ENCODE measurements at regions of chr9 and their contacts with region 1.

Region 1: DNA sequence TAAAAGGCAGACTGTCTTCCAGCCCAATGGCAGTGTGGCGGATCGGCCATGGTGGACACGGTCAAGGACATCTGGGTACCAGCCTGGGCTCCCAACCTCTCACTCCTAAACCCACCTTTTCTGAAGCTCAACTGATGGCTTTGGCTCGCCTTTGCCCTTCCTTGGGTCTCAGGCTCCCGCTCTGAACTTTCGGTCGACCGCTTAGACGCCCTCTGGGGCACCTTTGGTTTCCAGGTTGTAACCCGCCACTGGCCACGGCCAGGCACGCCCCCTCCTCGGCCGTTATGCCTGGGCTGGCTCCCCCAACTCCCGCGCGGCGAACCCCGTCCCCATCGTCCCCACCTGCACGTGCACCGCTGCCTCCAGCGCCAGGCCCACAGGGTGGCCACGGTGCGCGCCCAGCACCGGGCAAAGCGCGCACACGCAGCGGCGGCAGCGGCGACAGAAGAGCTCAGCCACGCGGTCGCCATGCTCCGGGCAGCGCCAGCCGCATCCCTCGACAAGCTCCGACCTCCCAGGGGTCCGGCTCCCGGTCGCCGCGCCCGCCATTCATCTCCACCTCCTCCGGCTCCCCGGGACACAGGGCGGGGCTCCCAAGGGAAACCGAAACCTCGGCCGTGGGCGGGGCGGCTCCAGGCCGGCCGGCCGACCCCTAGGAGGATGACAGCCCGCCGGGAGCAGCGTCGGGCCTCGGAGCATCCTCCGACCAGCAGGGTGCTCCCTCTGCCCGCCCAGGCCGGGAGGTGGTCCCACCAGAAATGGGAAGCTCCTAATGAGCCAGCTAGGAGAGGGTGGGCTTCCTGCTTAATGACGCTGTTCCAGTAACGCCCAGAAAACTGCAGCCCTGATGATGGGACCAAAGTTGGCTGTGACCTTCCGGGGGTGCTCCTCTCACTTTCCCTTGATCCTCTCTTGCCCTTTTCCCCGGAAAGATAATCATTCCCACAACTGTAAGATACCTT is at the start of gene TRIM14:
- DNase-seq: peak; percentile 71
- H3K4me3 Mint-ChIP-seq: peak within 1 kb of the TSS; percentile 95
- H3K27ac Mint-ChIP-seq: peak within 1 kb of the TSS; percentile 98
- H3K4me1 Mint-ChIP-seq: peaks cover 42% of the 10 kb centered on the region
- H3K27me3 Mint-ChIP-seq: no peaks in the 10 kb centered on the region
- total RNA-seq, gene TRIM14: 41.7 and 42.0 TPM in 2 replicates

Region 2: DNA sequence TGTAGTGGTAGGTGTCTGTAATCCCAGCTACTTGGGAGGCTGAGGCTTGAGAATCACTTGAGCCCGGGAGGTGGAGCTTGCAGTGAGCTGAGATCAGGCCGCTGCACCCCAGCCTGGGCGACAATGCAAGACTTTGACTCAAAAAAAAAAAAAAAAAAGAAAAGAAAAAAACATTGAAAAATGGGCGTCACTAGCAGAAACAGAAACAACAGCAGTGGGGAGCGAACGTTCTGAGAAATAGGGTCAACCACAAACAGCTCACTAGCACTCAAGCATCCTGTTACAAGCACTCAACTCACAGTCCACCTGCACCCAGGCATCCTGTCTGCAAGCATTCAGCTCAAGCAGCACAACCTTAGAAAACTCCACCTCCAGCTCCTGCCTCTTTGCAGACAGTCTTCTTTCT is 17.1 kb before region 1 on chr9:
- intact Hi-C with region 1: loop called (anchors 1 kb)
- DNase-seq: peak; percentile 83
- H3K4me3 Mint-ChIP-seq: peak overlapping the region; percentile 69
- H3K27ac Mint-ChIP-seq: peak overlapping the region; percentile 88
- H3K4me1 Mint-ChIP-seq: peaks cover 85% of the 10 kb centered on the region
- H3K27me3 Mint-ChIP-seq: no peaks in the 10 kb centered on the region